ENCODE measurements at regions of chr9 and their contacts with region 1.

Region 1: GRCh38 chr9:2053883-2054845 is 39.0 kb downstream of the SMARCA2 start:
- DNase-seq: peak; percentile 85
- ATAC-seq: peak; percentile 91
- H3K4me3 Mint-ChIP-seq: peak overlapping the region; percentile 58
- H3K27ac Mint-ChIP-seq: peak overlapping the region; percentile 84
- H3K4me1 Mint-ChIP-seq: peaks cover 52% of the 10 kb centered on the region
- H3K27me3 Mint-ChIP-seq: no peaks in the 10 kb centered on the region

Region 2: GRCh38 chr9:2000314-2000713 is 53.9 kb before region 1 on chr9:
- CTCF ChIA-PET with region 1: no interaction called
- POLR2A ChIA-PET with region 1: no interaction called
- intact Hi-C with region 1: no loop called
- DNase-seq: no peak
- ATAC-seq: no peak
- H3K4me3 Mint-ChIP-seq: no peak overlapping the region
- H3K27ac Mint-ChIP-seq: no peak overlapping the region
- H3K4me1 Mint-ChIP-seq: peaks cover 9% of the 10 kb centered on the region
- H3K27me3 Mint-ChIP-seq: no peaks in the 10 kb centered on the region

Region 3: DNA sequence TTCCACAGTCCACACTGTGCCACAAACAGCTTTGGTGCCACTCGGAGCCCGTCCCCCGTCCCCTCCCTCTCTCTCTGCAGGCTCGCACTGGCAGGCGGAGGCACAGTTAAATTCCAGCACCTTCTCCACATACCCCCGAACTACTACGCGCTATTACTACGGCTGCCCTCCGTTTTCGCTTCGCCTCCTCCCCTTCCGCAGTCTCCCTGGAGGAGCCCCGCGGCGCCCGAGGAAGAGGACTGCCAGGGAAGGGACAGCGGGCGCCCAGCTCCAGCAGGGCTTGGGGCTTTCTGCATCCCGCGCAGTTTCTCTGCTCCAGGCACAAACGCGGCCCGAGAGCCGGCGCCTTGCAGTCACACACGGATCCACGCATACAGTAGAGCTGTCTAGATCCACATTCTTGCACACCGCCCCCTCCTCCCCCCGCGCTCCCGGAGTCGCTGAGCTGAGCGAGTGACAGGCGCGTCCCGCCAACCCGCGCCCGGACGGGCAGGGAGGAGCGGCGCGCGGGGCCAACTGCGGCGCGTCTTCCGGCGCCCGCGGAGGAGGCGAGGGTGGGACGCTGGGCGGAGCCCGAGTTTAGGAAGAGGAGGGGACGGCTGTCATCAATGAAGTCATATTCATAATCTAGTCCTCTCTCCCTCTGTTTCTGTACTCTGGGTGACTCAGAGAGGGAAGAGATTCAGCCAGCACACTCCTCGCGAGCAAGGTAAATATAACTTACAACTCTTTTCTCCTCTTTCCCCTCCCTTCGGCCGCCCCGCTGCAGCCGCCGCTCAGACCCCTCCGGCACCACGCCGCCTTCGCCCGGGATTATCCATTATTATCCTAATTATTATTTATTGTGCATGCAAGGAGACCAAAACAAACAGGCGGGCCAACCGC is 39.2 kb before region 1 on chr9 and contains the start of gene SMARCA2:
- CTCF ChIA-PET with region 1: interaction called, 4 read pairs
- POLR2A ChIA-PET with region 1: interaction called, 9 read pairs
- intact Hi-C with region 1: loop called (anchors 1 kb)
- DNase-seq: peak; percentile 98
- ATAC-seq: peak; percentile 84
- H3K4me3 Mint-ChIP-seq: peak within 1 kb of the TSS; percentile 92
- H3K27ac Mint-ChIP-seq: peak within 1 kb of the TSS; percentile 99
- H3K4me1 Mint-ChIP-seq: peaks cover 45% of the 10 kb centered on the region
- H3K27me3 Mint-ChIP-seq: no peaks in the 10 kb centered on the region
- total RNA-seq, gene SMARCA2: 91.3 to 94.0 TPM

Region 4: DNA sequence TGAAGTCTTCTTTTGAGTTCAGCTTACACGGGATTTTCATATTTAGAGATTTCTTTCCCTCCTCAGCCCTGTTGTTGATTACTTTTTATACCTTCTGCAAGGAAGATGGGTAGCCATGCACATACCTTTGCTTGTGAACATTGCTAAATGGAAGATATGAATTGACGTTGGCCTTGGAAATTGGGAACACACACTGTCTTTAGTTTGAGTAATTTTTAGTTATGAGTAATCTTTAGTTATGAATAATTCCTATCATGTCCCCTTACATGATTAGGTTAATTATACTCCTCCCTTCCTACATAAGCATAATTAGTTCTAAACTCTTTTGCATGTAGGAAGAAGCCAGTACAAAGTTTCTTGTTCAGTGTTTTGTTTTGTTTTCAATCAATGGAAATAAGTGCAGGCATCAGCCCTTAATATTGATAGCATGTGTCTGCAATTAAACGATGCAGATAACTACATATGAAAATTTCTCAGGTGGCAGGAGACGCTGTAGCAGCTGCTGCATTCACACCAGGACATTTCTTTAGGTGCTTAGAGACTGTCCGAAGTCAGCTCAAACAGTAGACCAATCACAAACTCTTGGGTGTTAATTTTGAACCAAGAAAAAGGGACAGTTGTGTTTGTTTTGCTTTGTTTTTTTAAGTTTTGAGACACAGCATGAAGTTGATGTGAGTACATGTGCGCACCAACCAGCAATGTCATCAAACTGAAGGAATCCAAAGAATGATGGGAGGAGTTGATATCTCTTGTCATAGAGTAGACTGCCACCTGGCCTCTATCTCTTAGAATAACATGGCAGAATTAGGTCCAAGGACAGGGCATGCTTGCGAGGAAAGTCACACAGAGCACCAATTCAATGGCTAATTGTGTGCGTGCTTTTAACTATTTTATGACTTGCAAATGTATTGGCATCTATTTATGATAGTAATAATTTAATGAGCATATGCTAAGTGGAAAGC is 12.4 kb after region 1 on chr9:
- CTCF ChIA-PET with region 1: interaction called, 7 read pairs
- POLR2A ChIA-PET with region 1: no interaction called
- intact Hi-C with region 1: loop called (anchors 1 kb)
- DNase-seq: no peak
- ATAC-seq: peak; percentile 81
- H3K4me3 Mint-ChIP-seq: no peak overlapping the region
- H3K27ac Mint-ChIP-seq: peak overlapping the region; percentile 31
- H3K4me1 Mint-ChIP-seq: peaks cover 16% of the 10 kb centered on the region
- H3K27me3 Mint-ChIP-seq: no peaks in the 10 kb centered on the region